PC-9 (cell line): ENCODE measurements at regions of chr12 and their contacts with region 1.

Region 1: DNA sequence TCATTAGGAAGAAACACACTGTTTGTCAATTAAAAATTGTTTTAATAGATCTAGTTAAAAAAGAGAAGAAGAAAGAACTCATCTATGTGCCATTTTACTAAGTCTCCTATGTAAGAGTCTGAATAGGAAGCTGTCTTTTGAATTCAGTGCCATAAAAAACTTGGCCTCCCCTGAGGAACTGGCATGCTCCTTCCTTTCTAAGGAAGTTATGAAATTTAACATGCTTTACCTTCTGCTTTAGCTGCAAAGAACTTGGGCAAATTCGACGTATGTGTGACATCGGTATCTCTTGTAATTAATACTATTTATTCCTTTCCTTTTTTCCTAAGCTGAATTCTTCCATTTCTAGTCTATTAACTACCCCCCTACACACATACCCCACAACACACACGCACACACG is 12.5 kb downstream of the TM7SF3 start:
- DNase-seq: no peak
- H3K4me3 ChIP-seq: no peak overlapping the region
- H3K27ac ChIP-seq: no peak overlapping the region
- H3K4me1 ChIP-seq: no peaks in the 10 kb centered on the region
- H3K27me3 ChIP-seq: no peaks in the 10 kb centered on the region
- CTCF ChIP-seq: no peak

Region 2: GRCh38 chr12:26595806-26596205 is 405.9 kb before region 1 on chr12:
- CTCF ChIA-PET with region 1: no interaction called
- POLR2A ChIA-PET with region 1: interaction called, 14 read pairs
- intact Hi-C with region 1: no loop called
- DNase-seq: no peak
- H3K4me3 ChIP-seq: no peak overlapping the region
- H3K27ac ChIP-seq: no peak overlapping the region
- H3K4me1 ChIP-seq: no peaks in the 10 kb centered on the region
- H3K27me3 ChIP-seq: no peaks in the 10 kb centered on the region
- CTCF ChIP-seq: no peak

Region 3: DNA sequence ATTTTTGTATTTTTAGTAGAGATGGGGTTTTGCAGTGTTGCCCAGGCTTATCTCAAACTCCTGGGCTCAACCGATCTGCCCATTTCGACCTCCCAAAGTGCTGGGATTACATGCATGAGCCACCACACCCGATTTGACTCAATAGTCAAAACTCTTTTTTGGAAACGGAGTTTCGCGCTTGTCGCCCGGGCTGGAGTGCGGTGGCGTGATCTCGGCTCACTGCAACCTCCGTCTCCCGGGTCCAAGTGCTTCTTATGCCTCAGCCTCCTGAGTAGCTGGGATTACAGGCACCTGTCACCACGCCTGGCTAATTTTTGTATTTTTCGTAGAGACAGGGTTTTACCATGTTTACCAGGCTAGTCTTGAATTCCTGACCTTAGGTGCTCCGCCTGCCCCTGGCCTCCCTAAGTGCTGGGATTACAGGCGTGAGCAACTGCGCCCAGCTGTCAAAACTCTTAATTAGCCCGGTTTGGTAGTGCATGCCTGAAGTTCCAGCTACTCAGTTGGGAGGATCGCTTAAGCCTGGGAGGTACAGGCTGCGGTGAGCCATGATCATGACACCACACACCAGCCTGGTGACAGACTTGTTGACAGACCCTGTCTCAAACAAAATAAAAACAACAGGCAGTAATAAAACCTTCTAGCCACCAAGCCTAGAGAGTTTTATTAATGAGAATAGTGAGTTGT is 33.1 kb after region 1 on chr12:
- CTCF ChIA-PET with region 1: no interaction called
- POLR2A ChIA-PET with region 1: no interaction called
- intact Hi-C with region 1: no loop called
- DNase-seq: no peak
- H3K4me3 ChIP-seq: no peak overlapping the region
- H3K27ac ChIP-seq: no peak overlapping the region
- H3K4me1 ChIP-seq: no peaks in the 10 kb centered on the region
- H3K27me3 ChIP-seq: no peaks in the 10 kb centered on the region
- CTCF ChIP-seq: no peak